ENCODE measurements at regions of chr9 and their contacts with region 1.

Region 1: DNA sequence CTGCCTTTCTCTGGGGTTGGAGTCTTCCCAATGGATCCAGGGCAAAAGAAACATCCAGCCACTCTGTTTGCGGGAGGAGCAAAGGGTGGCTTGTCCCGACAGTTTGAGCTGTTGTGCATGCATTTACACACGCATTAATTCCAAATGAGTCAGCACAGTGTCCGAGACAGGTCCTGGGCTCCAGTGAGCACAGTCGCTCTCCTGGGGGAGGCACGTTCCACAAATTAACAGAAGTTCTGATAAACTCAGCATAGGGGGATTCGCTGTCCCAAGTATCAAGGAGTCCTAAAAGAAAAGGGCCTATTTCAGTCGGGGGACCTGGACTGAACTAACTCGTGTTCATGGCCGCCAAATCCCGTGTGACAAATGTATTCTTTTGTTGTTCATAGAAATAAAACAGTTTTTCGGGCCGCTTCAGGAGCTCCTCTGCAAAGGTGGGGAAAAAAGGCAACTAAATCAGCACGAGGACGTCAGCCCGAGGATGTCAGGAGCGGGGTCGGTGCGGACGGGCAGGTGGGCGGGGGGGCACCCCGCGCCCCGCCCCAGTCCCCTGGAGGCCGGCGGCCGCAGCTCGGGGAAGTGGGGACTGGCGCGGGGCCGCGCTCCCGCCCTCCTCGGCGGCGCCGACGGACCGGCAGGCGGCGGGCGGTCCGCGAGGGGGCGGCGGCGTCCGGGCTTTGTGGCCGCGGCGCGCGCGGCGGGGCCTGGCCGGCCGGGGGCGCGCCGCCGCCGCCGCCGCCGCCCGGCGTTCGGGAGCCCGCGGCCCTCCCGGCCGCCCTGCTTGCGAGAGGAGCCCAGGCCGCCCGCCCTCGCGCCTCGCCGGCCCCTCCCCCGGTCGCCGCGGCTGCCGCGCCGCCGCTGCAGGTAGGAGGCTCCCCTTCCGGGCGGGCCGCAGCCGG is at the start of gene MSANTD3:
- H3K4me3 ChIP-seq: peak within 1 kb of the TSS; percentile 76
- H3K27ac ChIP-seq: peak within 1 kb of the TSS; percentile 88
- H3K4me1 ChIP-seq: peaks cover 10% of the 10 kb centered on the region; the same call in 1 of the 2 replicates
- CTCF ChIP-seq: no peak

Region 2: DNA sequence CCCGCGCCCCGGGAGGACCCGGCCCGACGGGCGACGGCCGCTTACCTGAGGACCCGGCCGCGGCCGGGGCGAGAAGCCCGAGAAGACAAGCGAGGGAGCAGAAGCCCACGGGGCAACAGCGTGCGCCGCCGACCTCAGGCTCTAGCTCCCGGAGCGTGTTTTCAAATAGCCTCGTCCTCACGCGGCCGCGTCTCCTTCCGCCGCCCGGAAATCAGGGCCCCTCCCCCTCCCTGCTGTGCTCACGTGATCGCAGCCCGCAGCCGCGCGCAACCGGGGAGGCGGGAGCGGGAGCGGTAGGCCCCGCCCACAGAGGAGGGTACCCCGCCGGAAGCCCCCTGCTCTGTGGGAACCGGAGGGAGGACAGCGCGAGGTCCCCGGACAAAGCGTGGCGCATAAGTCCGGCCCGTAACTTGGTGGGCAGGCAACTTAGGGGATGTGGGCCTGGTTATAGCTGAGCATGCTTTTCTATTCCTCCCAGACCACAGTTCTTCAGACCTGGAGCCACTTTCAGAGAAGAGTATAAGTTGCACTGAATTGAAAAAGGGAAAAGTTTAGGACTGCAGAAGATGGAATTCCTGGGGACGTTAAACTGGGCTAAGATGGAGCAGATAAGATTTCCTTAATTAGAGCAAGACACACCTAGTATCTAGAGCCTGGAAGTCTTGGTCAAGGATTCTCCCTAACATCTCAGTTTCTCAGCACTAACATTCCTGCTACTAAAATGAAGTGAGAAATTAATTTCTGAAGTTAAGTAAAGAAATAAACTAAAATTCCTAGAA is 73.9 kb before region 1 on chr9 and contains the start of gene TEX10:
- CTCF ChIA-PET with region 1: interaction called, 4 read pairs
- POLR2A ChIA-PET with region 1: interaction called, 10 read pairs
- H3K4me3 ChIP-seq: peak within 1 kb of the TSS; percentile 69
- H3K27ac ChIP-seq: peak within 1 kb of the TSS; percentile 80
- H3K4me1 ChIP-seq: no peaks in the 10 kb centered on the region
- CTCF ChIP-seq: no peak

Region 3: DNA sequence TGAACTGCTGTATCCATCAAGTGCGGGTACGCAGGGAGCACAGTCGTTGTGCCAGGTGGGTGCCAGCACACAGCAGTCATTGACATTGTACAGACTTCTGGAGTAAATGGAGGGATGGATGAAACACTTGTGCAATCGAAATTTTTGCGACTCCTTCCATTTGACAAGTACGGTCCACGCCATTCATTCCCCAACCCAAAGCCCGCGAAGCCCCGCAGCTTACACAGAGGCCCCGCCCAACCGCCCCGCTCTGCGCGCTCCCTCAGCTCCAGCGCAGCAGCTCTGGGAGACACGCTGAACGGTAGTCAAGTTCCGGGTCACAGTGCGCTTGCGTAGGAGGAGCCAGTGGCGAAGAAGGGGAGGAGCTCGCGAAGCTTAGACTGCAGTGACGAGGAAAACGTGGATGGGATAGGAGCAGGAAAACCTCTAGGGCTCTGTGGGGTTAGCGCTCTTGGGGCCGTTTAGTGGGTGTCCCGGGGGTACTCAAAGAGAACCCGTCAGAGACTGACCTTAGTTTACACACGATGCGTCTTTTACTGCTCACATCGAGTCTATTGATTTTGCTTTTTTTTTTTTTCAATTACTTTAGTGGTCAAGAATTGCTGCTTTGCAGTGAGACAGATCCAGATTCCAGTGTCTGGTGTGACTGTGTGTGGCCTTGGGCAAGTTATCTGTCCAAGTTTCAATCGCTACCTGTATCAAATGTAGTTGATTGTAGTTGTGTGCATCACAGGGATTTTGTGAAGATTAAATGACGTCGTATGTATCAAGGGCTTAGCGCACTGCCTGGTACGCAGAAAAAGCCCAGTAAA is 15.1 kb before region 1 on chr9:
- CTCF ChIA-PET with region 1: interaction called, 5 read pairs
- POLR2A ChIA-PET with region 1: interaction called, 10 read pairs
- H3K4me3 ChIP-seq: peak overlapping the region; percentile 49
- H3K27ac ChIP-seq: no peak overlapping the region
- H3K4me1 ChIP-seq: no peaks in the 10 kb centered on the region
- CTCF ChIP-seq: no peak

Measured in HEK293 (cell line).